Kidney (tissue), 22 donors: ENCODE measurements at regions of chr14 and their contacts with region 1.

Region 1: GRCh38 chr14:69259527-69260189 is at the start of gene GALNT16:
- DNase-seq: peak; percentile 65 to 80 (median 73)
- H3K4me3 ChIP-seq: peak within 1 kb of the TSS; percentile 28 to 55 (median 28)
- H3K27ac ChIP-seq: no peak within 1 kb of the TSS
- H3K4me1 ChIP-seq: peaks cover 0 to 4% (median 0%) of the 10 kb centered on the region in 3 donors
- H3K27me3 ChIP-seq: peaks cover 7% of the 10 kb centered on the region
- CTCF ChIP-seq: no peak
- total RNA-seq, gene GALNT16: 13.1 TPM

Region 2: GRCh38 chr14:68676511-68676943 is 583.1 kb before region 1 on chr14:
- intact Hi-C with region 1: no loop called
- DNase-seq: peak in 2 of 5 donors; percentile 48 to 51
- H3K4me3 ChIP-seq: no peak overlapping the region
- H3K27ac ChIP-seq: no peak overlapping the region
- H3K4me1 ChIP-seq: peaks cover 4 to 24% (median 13%) of the 10 kb centered on the region in 3 donors
- H3K27me3 ChIP-seq: no peaks in the 10 kb centered on the region
- CTCF ChIP-seq: no peak

Region 3: DNA sequence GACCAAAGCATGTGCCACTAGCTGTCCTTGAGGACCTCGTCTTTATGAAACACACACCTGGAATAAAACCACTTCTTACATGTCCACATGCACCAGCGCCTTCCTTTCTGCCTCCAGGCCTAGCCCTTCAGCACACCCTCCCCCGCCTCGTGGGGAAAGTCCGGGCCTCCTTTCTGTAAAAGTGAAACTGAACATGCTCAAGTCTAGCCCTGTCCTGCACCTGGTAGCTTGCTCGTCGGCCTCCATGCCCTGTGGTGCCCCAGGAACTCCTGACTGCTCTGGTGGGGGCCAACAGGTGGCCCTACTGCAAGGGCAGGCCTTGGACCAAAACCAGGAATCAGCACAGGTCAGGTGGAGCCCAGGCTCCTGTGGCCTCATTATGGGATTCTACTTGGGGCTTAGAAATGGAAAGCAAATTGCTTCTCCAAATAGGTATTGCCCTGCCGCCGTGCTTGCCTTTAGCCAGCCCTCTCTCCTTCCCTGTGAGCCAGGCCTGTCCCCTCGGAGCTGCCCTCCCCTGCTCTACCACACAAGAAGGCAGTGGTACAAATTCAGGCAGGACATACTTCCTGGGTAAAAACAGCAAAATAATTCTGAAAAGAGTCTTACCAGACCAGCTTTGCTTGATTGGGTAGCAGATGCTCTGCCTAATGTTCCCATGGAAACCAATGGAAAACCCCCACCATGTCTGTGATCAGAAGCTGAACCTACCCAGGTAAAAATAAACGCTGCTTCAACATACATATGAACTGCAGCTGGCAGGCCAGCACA is 94.9 kb after region 1 on chr14:
- intact Hi-C with region 1: loop called (anchors 10 kb)
- DNase-seq: peak in 4 of 5 donors; percentile 26 to 89 (median 51)
- H3K4me3 ChIP-seq: no peak overlapping the region
- H3K27ac ChIP-seq: peak overlapping the region; percentile 23 to 27
- H3K4me1 ChIP-seq: peaks cover 0 to 4% (median 0%) of the 10 kb centered on the region in 3 donors
- H3K27me3 ChIP-seq: no peaks in the 10 kb centered on the region
- CTCF ChIP-seq: no peak